ENCODE measurements at regions of chr1 and their contacts with region 1.

Region 1: GRCh38 chr1:209354111-209354839 is 229.2 kb upstream of the CAMK1G start:
- DNase-seq: peak; percentile 69
- CTCF ChIP-seq: peak; percentile 89

Region 2: DNA sequence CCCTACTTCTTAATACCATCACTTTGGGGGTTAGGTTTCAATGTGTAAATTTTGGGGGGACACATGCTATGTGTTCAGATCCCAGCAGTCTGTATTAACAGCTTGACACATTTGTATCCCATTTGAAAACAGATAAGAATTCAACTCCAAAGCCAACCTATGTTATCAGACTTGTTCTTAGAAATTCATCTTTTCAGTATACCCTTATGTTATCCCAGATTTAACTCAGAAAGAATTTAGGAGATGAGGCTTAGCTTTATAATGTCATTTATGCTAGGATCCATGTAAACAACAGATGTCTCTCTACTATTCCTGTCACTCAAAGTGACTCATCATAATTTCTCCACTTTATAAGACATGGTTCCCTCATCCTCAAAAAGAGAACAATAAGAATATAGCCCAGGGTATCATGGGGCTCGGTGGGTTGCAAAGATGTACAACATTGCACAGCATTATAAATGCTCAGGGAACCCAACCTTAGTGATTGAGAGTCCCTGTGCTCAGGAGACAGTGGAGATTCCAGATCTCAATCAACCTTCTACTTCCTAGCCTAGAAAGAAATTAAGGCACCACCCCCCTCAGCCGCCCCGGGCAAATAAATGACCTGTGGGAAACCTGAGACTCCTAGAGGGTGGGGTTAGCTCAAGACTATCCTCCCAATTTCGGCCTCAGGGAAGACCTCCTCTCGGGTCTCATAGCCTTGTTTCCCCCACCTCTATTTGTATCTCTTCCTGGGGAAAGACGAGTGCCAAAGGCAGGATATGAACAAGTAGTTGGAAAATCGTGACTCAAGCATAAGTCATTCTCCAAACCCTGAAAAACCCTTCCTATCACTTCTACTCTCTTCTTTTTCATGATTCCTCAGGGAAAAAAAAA is 35.9 kb before region 1 on chr1:
- CTCF ChIA-PET with region 1: no interaction called
- POLR2A ChIA-PET with region 1: no interaction called
- DNase-seq: no peak
- CTCF ChIP-seq: no peak

Region 3: DNA sequence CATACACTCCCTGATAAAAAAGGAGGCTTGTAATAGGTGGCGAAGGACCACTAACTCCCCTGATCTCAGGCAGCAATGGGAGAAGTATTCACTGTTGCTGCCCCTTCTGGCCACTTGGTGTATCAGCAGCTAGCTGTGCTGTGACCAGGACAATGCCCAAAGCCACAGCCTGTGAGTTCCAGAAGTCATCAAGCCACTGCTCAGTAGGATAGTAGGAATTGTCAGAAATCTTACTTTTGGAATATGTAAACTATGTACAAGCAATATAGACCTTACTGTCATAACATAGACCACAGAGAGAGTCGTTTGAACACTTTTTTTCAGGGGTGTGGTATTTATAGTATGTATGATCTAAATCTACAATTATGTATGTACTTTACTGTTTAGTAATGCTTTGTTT is 19.1 kb before region 1 on chr1:
- CTCF ChIA-PET with region 1: interaction called, 13 read pairs
- POLR2A ChIA-PET with region 1: no interaction called
- DNase-seq: peak; percentile 31
- CTCF ChIP-seq: peak; percentile 79

Region 4: GRCh38 chr1:209342441-209343175 is 11.7 kb before region 1 on chr1:
- CTCF ChIA-PET with region 1: interaction called, 29 read pairs
- POLR2A ChIA-PET with region 1: no interaction called
- DNase-seq: no peak
- CTCF ChIP-seq: no peak

Region 5: GRCh38 chr1:209364716-209365115 is 10.4 kb after region 1 on chr1:
- CTCF ChIA-PET with region 1: interaction called, 14 read pairs
- POLR2A ChIA-PET with region 1: no interaction called
- DNase-seq: no peak
- CTCF ChIP-seq: no peak

Region 6: DNA sequence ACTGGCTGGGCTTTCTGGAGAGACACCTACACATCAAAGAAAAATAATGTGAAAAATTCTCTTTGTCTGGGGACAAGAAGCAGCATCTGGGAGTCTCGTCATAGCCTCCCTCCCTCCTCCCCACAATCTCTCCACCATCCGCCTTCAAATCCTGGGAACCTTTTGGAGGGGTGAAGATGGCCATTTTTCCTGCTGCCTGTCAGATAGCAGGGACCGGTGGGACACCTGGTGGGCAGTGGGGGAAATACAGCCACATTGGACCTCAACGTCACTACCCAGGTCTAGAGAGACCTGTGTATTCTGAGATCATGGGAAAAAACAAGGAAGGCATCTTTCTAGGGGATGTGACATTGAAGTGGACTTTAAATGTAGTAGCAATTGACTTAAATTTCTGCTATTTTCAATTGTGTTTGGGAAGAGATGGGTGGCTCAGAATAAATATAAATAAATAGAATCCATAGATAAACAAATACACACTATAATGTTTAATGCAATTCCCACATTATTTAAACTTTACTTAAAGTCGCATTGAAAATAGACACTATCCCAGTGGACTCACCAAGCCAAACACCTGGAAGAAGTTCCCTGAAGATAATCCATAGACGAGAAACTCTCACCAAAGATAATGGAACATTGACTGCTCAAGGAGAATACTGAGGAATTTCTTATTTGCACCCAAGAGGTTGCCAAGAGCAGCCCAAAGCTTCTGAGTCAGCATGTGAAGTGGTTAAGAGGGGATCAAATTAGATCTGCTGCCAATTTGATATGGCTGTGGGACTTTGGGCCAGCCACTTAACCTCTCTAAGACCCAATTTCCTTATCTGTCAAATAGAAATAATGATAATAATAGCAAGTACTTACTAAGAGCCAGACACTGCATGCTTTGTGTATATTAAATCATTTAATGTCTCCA is 81.6 kb after region 1 on chr1:
- CTCF ChIA-PET with region 1: no interaction called
- POLR2A ChIA-PET with region 1: no interaction called
- DNase-seq: peak; percentile 54
- CTCF ChIP-seq: peak; percentile 65

Region 7: GRCh38 chr1:209493559-209493958 is 139.3 kb after region 1 on chr1:
- CTCF ChIA-PET with region 1: no interaction called
- POLR2A ChIA-PET with region 1: no interaction called
- DNase-seq: no peak
- CTCF ChIP-seq: no peak

Measured in GM10248 (cell line).